ENCODE measurements at regions of chr16 and their contacts with region 1.

Region 1: DNA sequence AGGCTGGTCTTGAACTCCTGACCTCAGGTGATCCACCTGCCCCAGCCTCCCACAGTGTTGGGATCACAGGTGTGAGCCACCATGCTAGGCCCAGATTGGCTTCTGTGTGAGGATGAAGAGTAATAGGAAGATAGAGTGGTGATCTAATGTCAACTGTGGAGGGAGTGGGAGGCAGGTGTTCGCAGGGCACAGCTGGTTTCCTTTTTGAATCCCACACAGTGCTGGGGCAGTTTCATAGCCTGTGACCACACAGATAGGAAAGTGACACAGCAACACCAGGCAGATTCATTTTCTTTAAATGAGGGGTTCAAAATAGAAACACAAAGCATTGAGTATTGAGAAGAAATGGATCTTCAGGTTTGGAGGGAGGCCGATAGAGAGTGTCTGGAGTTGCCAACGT is 540.3 kb downstream of the WWOX start:
- DNase-seq: no peak
- ATAC-seq: no peak

Region 2: GRCh38 chr16:78522327-78522726 is 117.4 kb before region 1 on chr16:
- intact Hi-C with region 1: loop called (anchors 10 kb)
- DNase-seq: no peak
- ATAC-seq: no peak